Activated CD4-positive, alpha-beta T cell treated with anti-CD3 and anti-CD28 coated beads for 36 hours (primary cell): ENCODE measurements at regions of chr3 and their contacts with region 1.

Region 1: DNA sequence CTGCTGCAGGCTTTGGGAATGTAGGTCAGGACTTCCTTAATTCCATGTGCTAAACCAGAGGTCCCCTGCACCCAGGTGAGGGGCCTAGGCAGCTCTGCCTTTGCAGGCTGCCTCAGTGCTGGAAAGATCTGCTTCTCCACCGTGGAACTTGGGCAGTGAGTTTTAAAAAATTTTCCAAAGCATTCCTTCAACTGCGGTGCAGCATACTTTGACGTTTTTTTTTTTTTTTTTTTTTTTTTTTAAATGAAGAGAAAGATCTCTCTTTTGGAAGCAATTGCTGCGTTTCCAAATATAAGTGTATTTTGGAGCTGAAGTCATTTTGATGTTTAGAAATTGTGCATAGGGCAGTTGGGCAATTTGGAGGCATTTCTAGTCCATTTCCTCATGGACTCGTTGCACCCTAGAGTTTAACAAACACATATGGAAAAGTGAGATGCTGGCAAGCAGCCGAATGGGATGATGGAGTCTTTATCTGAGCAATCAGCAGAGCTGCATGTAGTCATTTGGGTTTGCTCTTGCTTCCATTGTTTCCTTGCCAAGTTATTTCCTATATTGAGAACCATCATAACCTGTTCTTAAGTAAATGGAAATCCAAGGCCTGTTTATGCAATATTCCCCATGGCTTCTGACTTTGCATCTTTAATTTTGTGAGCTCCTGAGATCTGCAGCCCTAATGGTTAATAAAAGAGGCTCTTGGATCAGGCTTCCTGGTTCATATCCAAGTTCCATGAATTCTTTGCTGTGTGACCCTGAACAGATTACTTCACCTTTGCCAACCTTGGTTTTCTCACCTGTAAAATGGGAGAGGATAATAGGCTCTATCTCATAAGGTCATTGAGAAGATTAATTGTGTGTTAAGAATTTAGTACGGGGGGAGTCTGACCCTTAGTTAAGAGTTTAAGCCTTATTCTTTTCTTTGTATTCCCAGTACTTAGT is 31.2 kb downstream of the ITPR1 start:
- DNase-seq: no peak
- ATAC-seq: no peak
- H3K4me3 Mint-ChIP-seq: no peak overlapping the region
- H3K27ac Mint-ChIP-seq: no peak overlapping the region
- H3K4me1 Mint-ChIP-seq: peaks cover 19% of the 10 kb centered on the region
- H3K27me3 Mint-ChIP-seq: no peaks in the 10 kb centered on the region

Region 2: GRCh38 chr3:4504340-4505261 is 19.8 kb before region 1 on chr3:
- CTCF ChIA-PET with region 1: interaction called, 28 read pairs
- POLR2A ChIA-PET with region 1: interaction called, 4 read pairs
- intact Hi-C with region 1: no loop called
- DNase-seq: peak; percentile 51
- ATAC-seq: peak; percentile 81
- H3K4me3 Mint-ChIP-seq: peak overlapping the region; percentile 72
- H3K27ac Mint-ChIP-seq: peak overlapping the region; percentile 95
- H3K4me1 Mint-ChIP-seq: peaks cover 54% of the 10 kb centered on the region
- H3K27me3 Mint-ChIP-seq: no peaks in the 10 kb centered on the region

Region 3: DNA sequence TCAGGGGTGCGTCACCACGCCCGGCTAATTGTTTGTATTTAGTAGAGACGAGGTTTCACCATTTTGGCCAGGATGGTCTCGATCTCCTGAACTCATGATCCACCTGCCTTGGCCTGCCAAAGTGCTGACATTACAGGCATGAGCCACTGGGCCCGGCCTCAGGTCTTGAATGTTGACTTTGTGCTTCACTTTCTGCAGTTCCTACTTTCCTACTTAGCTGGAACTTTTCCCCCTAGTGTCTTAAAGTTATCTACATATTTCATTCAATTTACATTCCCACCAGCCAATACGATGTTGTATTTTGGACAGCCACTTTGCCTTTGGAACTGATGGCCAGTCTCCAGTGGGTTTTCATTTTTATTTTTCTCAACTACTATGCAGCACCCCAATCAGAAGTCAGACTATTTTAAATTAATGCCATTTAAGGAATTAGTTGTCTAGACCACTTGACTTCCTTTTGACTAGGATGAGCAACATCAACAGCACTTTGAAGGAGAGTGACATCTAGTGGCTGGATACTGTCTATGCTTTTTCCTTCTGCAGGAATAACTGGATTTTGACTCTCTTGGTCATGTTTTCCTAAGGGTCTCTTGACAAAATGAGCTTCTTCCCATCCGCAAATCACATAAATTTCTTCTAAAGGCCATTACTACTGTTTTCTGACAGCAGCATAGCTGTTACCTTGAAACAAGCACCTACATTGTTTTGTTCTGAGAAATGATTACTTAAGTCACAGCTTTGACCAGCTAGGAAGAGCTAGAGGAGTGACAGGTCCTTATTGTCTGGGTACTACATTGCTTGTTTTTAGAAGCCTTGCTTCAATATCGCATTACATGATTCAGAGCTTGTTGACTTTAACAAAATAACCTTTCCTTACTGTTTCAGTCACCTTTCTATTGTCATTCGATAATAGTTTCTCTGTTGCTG is 109.0 kb after region 1 on chr3:
- CTCF ChIA-PET with region 1: interaction called, 7 read pairs
- POLR2A ChIA-PET with region 1: no interaction called
- intact Hi-C with region 1: loop called (anchors 1 kb)
- DNase-seq: no peak
- ATAC-seq: peak; percentile 57
- H3K4me3 Mint-ChIP-seq: no peak overlapping the region
- H3K27ac Mint-ChIP-seq: peak overlapping the region; percentile 37
- H3K4me1 Mint-ChIP-seq: peaks cover 6% of the 10 kb centered on the region
- H3K27me3 Mint-ChIP-seq: no peaks in the 10 kb centered on the region